ENCODE measurements at regions of chr9 and their contacts with region 1.

Region 1: DNA sequence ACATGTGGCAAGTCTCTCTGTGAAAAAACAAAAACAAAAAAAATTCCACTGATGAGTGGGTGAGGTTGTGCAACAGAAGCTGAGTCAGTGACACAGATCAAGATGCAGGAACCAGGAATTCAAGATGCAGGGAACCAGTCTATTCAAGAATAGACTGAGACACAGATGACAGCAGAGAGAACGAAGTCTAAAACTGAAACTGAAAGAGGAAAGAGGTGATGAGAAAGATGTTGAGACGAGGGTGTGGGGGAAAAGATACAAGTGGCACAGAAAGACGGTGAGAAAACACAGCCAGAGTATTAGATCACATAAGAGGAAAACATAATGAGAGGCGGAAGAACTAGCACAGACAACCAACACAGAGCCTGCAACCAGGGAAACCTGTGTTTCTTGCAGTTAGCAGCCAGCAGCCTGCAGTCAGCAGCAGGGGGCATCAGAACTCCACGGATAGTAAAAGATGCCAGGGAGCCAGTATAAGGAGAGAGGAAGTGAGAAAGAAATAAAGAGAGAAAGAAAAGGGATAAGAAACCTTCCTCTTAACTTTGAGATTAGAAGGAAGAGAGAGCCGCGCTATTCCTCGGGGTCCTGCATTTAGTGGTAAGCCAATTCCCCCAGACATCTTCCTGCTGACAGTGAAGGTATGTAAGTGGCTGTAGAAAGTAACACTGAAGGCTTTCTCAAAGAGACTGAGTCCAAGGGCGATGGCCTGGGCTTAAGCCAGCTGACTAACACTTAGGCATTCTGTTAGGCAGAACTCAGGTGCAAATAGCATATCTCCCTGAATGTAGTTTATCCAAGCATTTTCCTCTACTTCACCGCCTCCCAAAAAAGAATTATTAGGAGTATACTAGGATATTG is 79.0 kb downstream of the TLR4 start:
- DNase-seq: peak; percentile 51
- H3K4me3 Mint-ChIP-seq: no peak overlapping the region
- H3K27ac Mint-ChIP-seq: no peak overlapping the region
- H3K4me1 Mint-ChIP-seq: no peaks in the 10 kb centered on the region
- H3K27me3 Mint-ChIP-seq: no peaks in the 10 kb centered on the region
- CTCF ChIP-seq: peak; percentile 34

Region 2: GRCh38 chr9:117644133-117644931 is 138.8 kb before region 1 on chr9:
- CTCF ChIA-PET with region 1: no interaction called
- intact Hi-C with region 1: loop called (anchors 2 kb)
- DNase-seq: peak; percentile 54
- H3K4me3 Mint-ChIP-seq: no peak overlapping the region
- H3K27ac Mint-ChIP-seq: no peak overlapping the region
- H3K4me1 Mint-ChIP-seq: no peaks in the 10 kb centered on the region
- H3K27me3 Mint-ChIP-seq: no peaks in the 10 kb centered on the region
- CTCF ChIP-seq: peak; percentile 71